Activated CD8-positive, alpha-beta T cell treated with anti-CD3 and anti-CD28 coated beads, Interleukin-2, amount 10 ng/mL, durations not matched to agents 7 days and 5 days (primary cell): ENCODE measurements at regions of chrX and their contacts with region 1.

Region 1: DNA sequence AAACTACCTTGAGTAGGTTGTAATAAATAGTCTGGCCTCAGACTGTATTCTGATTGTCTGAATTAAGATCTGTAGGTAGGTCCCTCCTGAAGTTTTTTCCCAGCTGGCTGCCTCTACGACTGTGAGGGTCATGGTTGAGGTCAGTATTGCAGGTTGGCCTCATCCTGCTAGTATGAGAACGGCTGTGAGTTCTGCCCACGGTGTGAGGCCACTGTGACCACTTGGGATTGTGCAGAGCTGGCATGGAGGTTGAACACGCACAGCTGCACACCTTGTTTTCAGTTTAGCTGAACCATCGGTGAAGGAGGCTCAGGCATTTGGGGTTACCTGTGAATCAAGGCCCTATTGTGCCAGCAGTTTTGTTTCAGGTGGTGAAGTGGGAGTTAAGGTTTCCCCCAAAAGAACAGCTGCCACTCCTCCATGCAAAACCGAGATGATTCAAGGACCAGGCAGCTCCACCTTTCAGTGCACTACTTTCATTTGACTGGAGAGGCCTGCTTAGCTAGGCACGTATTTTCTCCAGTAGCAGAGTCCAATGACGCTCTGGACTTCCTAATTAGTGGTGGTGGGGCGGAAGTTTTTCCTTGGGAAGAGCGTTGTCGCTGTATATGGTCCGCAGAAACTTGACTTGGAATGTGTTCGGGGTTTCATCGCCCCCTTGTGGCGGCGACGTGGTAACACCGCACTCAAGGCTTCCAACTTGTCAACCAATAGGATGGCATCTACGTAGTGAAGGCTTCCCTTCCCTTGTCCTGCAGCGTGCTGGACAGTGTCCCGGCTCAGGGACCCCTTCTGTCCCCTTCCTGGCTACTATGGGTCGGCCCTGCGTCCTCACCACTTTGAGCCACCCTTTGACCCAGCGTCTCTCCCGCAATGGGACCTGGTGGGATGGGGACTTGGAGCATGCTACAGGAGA is 13.8 kb downstream of the CMC4 start:
- DNase-seq: peak; percentile 62
- ATAC-seq: peak; percentile 82
- H3K4me3 Mint-ChIP-seq: peak overlapping the region; percentile 60
- H3K27ac Mint-ChIP-seq: peak overlapping the region; percentile 77
- H3K4me1 Mint-ChIP-seq: peaks cover 36% of the 10 kb centered on the region
- H3K27me3 Mint-ChIP-seq: no peaks in the 10 kb centered on the region

Region 2: GRCh38 chrX:154980330-154981096 is 76.6 kb before region 1 on chrX:
- CTCF ChIA-PET with region 1: interaction called, 19 read pairs
- POLR2A ChIA-PET with region 1: no interaction called
- DNase-seq: peak; percentile 85
- ATAC-seq: peak; percentile 98
- H3K4me3 Mint-ChIP-seq: peak overlapping the region; percentile 79
- H3K27ac Mint-ChIP-seq: peak overlapping the region; percentile 90
- H3K4me1 Mint-ChIP-seq: peaks cover 22% of the 10 kb centered on the region
- H3K27me3 Mint-ChIP-seq: no peaks in the 10 kb centered on the region

Region 3: DNA sequence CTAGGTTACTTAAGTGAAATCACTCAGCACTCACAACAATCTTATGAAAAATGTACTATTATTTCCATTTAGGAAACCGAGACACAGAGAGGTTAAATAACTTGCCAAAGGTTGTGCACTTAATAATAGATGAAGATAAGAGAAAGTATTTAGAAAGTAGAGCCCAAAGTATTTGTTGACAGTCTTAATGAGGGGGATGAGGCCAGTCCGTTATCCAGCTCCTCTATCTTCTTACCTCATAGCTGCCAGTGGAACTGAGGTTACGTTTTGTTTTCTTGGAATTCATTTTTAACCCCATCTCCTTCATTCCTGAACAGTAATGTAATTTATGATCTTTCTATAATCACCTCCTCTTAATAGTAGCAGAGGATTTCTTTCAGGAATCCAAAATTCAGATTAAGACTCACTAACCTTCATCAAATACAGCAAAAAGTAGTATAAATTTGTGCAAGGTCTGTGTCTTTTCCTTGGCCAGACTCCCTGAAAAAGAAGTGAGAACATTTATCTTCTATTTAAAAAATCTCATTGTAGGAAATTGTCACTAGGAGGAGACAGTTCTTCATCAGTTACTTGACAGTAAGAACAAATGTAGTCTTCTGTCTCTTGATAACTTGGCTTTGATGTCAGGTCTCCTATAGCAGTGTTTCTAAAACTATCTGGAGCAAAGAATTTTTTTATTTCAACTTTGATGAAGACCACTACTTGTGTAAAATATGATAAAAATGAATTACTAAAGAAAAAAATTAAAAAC is 70.1 kb before region 1 on chrX:
- CTCF ChIA-PET with region 1: interaction called, 18 read pairs
- POLR2A ChIA-PET with region 1: no interaction called
- DNase-seq: no peak
- ATAC-seq: no peak
- H3K4me3 Mint-ChIP-seq: no peak overlapping the region
- H3K27ac Mint-ChIP-seq: no peak overlapping the region
- H3K4me1 Mint-ChIP-seq: no peaks in the 10 kb centered on the region
- H3K27me3 Mint-ChIP-seq: peaks cover 4% of the 10 kb centered on the region

Region 4: GRCh38 chrX:155026726-155027508 is 30.2 kb before region 1 on chrX and contains the start of gene FUNDC2:
- CTCF ChIA-PET with region 1: interaction called, 12 read pairs
- POLR2A ChIA-PET with region 1: no interaction called
- DNase-seq: peak; percentile 95
- ATAC-seq: peak; percentile 90
- H3K4me3 Mint-ChIP-seq: peak within 1 kb of the TSS; percentile 87
- H3K27ac Mint-ChIP-seq: peak within 1 kb of the TSS; percentile 97
- H3K4me1 Mint-ChIP-seq: peaks cover 21% of the 10 kb centered on the region
- H3K27me3 Mint-ChIP-seq: peaks cover 10% of the 10 kb centered on the region
- total RNA-seq, gene FUNDC2: 49.3 to 51.7 TPM

Region 5: GRCh38 chrX:155070975-155071693 is 14.0 kb after region 1 on chrX and contains the starts of genes BRCC3, CMC4 and MTCP1:
- CTCF ChIA-PET with region 1: interaction called, 16 read pairs
- POLR2A ChIA-PET with region 1: interaction called, 3 read pairs
- DNase-seq: peak; percentile 82
- ATAC-seq: peak; percentile 93
- H3K4me3 Mint-ChIP-seq: peak within 1 kb of the TSS; percentile 91
- H3K27ac Mint-ChIP-seq: peak within 1 kb of the TSS; percentile 92
- H3K4me1 Mint-ChIP-seq: peaks cover 44% of the 10 kb centered on the region
- H3K27me3 Mint-ChIP-seq: no peaks in the 10 kb centered on the region
- total RNA-seq, gene BRCC3: 32.8 to 33.5 TPM
- total RNA-seq, gene CMC4: 4.1 to 5.6 TPM
- total RNA-seq, gene MTCP1: 20.2 to 21.4 TPM